Heart left ventricle (tissue), 16 donors: ENCODE measurements at regions of chr11 and their contacts with region 1.

Region 1: GRCh38 chr11:114774599-114775361 is 96.5 kb downstream of the NXPE2 start:
- DNase-seq: peak in 4 of 5 donors; percentile 21 to 35 (median 26)
- ATAC-seq: peak; percentile 71 to 86 (median 80)
- H3K4me3 ChIP-seq: no peak overlapping the region
- H3K27ac ChIP-seq: peak overlapping the region in 1 of 12 donors; percentile 39
- H3K4me1 ChIP-seq: peaks cover 0 to 15% (median 8%) of the 10 kb centered on the region in 12 donors
- H3K27me3 ChIP-seq: no peaks in the 10 kb centered on the region
- CTCF ChIP-seq: peak; percentile 40 to 74 (median 58)
- POLR2A ChIP-seq: no peak

Region 2: DNA sequence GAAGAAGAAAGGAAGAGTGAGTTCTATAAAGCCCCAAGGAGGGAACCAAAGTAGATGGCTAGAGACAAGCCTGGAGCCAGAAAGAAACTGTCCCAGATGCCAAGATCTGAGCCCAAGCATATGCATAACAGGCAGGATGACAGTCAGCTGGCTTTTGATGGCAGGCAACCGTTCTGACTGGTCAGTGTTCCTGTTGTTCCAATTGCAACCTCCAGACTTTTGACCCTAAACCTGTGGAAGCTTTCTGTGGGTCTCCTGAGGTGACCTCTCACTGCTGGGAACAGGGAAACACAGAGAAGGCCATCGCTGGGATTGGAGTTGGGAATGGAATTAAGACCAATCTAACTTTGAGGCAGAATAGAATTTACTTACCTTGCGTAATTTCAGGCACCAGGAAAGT is 500.1 kb before region 1 on chr11:
- intact Hi-C with region 1: no loop called
- DNase-seq: no peak
- ATAC-seq: no peak
- H3K4me3 ChIP-seq: no peak overlapping the region
- H3K27ac ChIP-seq: peak overlapping the region in 6 of 12 donors; percentile 14 to 68 (median 40)
- H3K4me1 ChIP-seq: no peaks in the 10 kb centered on the region
- H3K27me3 ChIP-seq: no peaks in the 10 kb centered on the region
- CTCF ChIP-seq: no peak
- POLR2A ChIP-seq: no peak

Region 3: GRCh38 chr11:114892381-114893197 is 117.8 kb after region 1 on chr11:
- intact Hi-C with region 1: loop called in 1 of 10 experiments (anchors 5 kb)
- DNase-seq: no peak
- ATAC-seq: peak in 3 of 4 donors; percentile 34 to 53 (median 35)
- H3K4me3 ChIP-seq: no peak overlapping the region
- H3K27ac ChIP-seq: peak overlapping the region in 6 of 12 donors; percentile 14 to 68 (median 40)
- H3K4me1 ChIP-seq: peaks cover 0 to 21% (median 0%) of the 10 kb centered on the region in 12 donors
- H3K27me3 ChIP-seq: no peaks in the 10 kb centered on the region
- CTCF ChIP-seq: peak in 9 of 12 donors; percentile 11 to 57 (median 26)
- POLR2A ChIP-seq: no peak

Region 4: GRCh38 chr11:114942207-114942606 is 167.4 kb after region 1 on chr11:
- intact Hi-C with region 1: loop called in 1 of 10 experiments (anchors 10 kb)
- DNase-seq: no peak
- ATAC-seq: no peak
- H3K4me3 ChIP-seq: no peak overlapping the region
- H3K27ac ChIP-seq: no peak overlapping the region
- H3K4me1 ChIP-seq: no peaks in the 10 kb centered on the region
- H3K27me3 ChIP-seq: no peaks in the 10 kb centered on the region
- CTCF ChIP-seq: peak in 1 of 12 donors; percentile 9
- POLR2A ChIP-seq: no peak

Region 5: GRCh38 chr11:114953039-114953438 is 178.3 kb after region 1 on chr11:
- intact Hi-C with region 1: loop called in 9 of 10 experiments (anchors 1 to 10 kb)
- DNase-seq: no peak
- ATAC-seq: peak; percentile 38 to 65 (median 56)
- H3K4me3 ChIP-seq: no peak overlapping the region
- H3K27ac ChIP-seq: no peak overlapping the region
- H3K4me1 ChIP-seq: no peaks in the 10 kb centered on the region
- H3K27me3 ChIP-seq: no peaks in the 10 kb centered on the region
- CTCF ChIP-seq: peak in 10 of 12 donors; percentile 5 to 47 (median 32)
- POLR2A ChIP-seq: no peak

Region 6: DNA sequence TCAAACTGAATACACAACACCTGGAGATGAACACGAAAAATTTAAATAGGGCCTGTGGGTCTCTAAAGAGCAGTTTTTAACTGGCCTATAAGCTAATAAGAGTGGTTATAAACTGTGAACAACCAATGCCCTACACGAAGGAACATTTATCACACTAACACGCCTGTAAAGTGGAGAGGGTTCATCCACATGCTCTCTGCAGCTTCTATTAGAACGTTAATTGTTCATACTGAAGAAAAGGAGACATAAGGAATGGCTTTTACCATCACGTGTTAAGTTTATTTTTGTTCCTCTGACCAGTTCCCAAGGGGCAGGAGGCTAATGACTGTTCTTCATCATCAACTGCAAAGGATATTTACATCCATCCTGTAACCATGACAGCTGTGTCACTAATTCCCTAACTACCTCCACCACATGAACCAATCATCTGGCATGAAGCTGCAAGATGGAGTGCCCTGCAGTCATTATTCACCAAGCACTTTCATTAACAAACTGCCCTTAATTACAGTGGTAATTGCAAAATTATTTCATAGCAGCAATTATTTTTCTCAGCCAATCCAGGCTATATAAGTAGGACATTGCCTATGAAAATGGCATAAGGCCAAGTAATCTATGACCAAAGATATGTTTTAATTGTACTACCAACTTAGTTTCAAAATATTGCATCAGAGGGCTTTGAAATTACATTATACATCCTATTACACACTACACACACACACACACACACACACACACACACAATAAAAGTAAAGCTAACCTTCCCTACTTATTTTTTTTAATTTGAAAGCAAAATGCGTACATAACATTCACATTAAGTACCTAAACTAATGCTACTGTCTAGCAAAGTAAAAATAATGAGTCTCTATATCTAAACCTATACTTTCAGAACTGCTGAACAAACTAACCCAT is 542.8 kb after region 1 on chr11:
- intact Hi-C with region 1: loop called in 3 of 10 experiments (anchors 10 kb)
- DNase-seq: no peak
- ATAC-seq: no peak
- H3K4me3 ChIP-seq: no peak overlapping the region
- H3K27ac ChIP-seq: no peak overlapping the region
- H3K4me1 ChIP-seq: peaks cover 0 to 24% (median 4%) of the 10 kb centered on the region in 12 donors
- H3K27me3 ChIP-seq: no peaks in the 10 kb centered on the region
- CTCF ChIP-seq: no peak
- POLR2A ChIP-seq: no peak

Region 7: GRCh38 chr11:115324581-115325432 is 550.0 kb after region 1 on chr11:
- intact Hi-C with region 1: loop called in 2 of 10 experiments (anchors 10 kb)
- DNase-seq: peak in 1 of 5 donors; percentile 20
- ATAC-seq: peak; percentile 61 to 90 (median 78)
- H3K4me3 ChIP-seq: peak overlapping the region in 3 of 12 donors; percentile 8 to 37 (median 14)
- H3K27ac ChIP-seq: no peak overlapping the region
- H3K4me1 ChIP-seq: peaks cover 0 to 8% (median 0%) of the 10 kb centered on the region in 12 donors
- H3K27me3 ChIP-seq: no peaks in the 10 kb centered on the region
- CTCF ChIP-seq: peak; percentile 67 to 85 (median 78)
- POLR2A ChIP-seq: no peak